Activated CD4-positive, alpha-beta T cell treated with anti-CD3 and anti-CD28 coated beads for 36 hours (primary cell): ENCODE measurements at regions of chr6 and their contacts with region 1.

Region 1: DNA sequence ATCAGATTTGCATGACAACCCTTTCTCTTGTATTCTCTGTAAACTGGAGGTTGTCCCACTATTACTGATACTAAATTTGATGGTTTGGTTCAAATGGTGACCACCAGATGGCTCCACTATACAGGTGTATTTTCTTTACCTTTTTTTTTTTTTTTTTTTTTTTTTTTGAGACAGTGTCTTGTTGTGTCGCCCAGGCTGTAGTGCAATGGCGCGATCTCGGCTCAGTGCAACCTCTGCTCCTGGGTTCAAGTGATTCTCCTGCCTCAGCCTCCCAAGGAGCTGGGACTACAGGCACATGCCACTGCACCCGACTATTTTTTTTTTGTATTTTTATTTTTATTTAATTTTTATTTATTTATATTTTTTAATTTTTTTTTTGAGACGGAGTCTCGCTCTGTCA is 6.6 kb upstream of the WTAP start:
- DNase-seq: peak; percentile 44
- ATAC-seq: peak; percentile 74
- H3K4me3 Mint-ChIP-seq: no peak overlapping the region
- H3K27ac Mint-ChIP-seq: no peak overlapping the region
- H3K4me1 Mint-ChIP-seq: peaks cover 30% of the 10 kb centered on the region
- H3K27me3 Mint-ChIP-seq: no peaks in the 10 kb centered on the region

Region 2: DNA sequence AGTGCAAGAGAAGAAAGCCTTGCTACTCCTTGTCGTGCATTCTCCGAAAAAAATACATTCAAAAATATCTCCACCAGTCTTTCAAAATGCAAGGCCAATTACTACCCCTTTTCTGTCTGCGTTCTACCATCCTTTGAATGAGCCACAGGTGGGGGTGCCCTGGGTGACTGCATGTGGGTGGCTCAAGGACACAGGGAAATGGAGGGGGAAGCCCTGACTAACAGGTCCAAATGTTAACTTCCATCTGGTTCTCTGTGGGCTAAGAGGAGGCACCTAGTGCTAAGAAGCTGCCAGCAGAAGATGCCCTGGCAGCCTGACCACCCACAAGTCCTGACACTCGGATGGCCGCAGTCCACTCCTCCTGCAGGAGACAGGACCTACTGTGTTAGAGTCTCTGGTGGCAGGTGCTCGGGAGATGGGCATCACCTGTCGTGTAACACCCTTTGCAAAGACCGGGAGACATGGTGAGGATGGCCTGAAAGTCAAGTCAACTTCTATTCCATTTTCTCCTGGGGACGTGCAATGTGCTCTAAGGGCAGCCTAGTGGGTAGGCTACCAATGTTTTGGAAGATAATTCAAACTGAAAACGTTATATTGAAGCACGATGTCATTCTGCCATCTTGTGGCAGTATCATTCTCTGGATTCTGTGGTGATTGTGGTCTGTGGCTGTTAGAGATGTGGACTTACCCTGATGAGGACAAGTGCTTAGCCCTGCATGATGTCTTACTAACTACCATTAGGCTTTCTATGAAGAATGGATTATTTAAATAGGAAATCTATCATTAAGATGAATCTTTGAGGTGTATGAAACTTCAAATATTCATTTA is 220.8 kb after region 1 on chr6:
- CTCF ChIA-PET with region 1: no interaction called
- POLR2A ChIA-PET with region 1: no interaction called
- intact Hi-C with region 1: loop called in 1 of 2 experiments (anchors 1 kb)
- DNase-seq: peak; percentile 50
- ATAC-seq: peak; percentile 97
- H3K4me3 Mint-ChIP-seq: no peak overlapping the region
- H3K27ac Mint-ChIP-seq: no peak overlapping the region
- H3K4me1 Mint-ChIP-seq: peaks cover 2% of the 10 kb centered on the region
- H3K27me3 Mint-ChIP-seq: no peaks in the 10 kb centered on the region